Mucosa of descending colon (tissue), 3 donors: ENCODE measurements at regions of chr11 and their contacts with region 1.

Region 1: GRCh38 chr11:55902303-55902702 is 12.1 kb downstream of the OR5W2 start:
- DNase-seq: no peak
- ATAC-seq: no peak
- H3K4me3 ChIP-seq: no peak overlapping the region
- H3K4me1 ChIP-seq: no peaks in the 10 kb centered on the region
- CTCF ChIP-seq: no peak

Region 2: GRCh38 chr11:55956521-55956920 is 54.2 kb after region 1 on chr11:
- intact Hi-C with region 1: loop called in 1 of 2 experiments (anchors 10 kb)
- DNase-seq: no peak
- ATAC-seq: no peak
- H3K4me3 ChIP-seq: no peak overlapping the region
- H3K4me1 ChIP-seq: no peaks in the 10 kb centered on the region
- CTCF ChIP-seq: no peak